ENCODE measurements at regions of chr7 and their contacts with region 1.

Region 1: DNA sequence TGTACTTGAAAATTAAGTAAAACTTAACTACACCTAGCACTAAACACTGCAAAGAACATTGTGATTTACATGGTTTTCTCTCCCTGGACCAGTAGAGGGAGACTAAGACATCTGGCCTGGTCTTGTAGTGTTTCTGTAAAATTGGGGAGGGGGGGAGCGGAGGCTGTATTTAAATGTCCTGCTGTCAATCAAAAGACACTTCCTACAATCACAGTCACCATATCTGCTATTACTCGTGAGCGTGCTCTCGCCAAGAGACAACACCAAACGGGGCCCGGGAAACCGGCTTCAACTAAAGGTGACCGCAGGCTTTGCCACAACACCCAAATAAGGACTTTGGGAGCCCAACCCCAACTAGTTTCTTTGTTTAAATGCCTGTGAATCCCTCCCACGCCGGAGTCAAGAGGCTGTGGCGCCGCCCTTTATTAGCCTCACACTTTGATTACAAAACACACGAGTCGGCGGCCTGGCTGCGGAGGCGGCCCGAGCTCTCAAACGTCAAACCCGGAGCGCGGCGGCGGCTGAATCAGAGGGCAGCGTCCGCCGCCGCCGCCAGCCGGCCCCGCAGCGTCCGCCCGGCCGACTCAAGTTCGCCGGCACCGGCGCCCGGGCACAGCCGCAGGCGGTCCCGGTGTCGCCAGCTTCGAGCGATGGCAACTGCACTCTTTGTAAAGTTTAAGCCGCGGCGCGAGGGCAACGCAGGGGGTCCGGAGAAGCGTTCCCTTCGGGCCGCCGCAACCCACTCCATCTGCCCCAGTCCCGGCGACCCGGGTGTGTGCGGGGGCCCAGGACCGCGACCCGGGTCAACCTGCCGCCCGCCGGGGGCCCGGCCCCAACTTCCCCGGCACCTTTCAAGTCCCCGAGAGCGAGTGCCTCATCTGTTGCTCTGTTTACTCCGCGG is 1.3 kb downstream of the KDM7A start:
- DNase-seq: peak; percentile 84 to 90
- H3K4me3 ChIP-seq: peak overlapping the region; percentile 83
- H3K4me3 Mint-ChIP-seq: peak overlapping the region; percentile 81
- H3K27ac Mint-ChIP-seq: peak overlapping the region; percentile 25
- H3K4me1 ChIP-seq: no peaks in the 10 kb centered on the region
- H3K4me1 Mint-ChIP-seq: peaks cover 13% of the 10 kb centered on the region
- H3K27me3 ChIP-seq: no peaks in the 10 kb centered on the region
- H3K27me3 Mint-ChIP-seq: peaks cover 6% of the 10 kb centered on the region
- CTCF ChIP-seq: peak; percentile 74 to 88

Region 2: DNA sequence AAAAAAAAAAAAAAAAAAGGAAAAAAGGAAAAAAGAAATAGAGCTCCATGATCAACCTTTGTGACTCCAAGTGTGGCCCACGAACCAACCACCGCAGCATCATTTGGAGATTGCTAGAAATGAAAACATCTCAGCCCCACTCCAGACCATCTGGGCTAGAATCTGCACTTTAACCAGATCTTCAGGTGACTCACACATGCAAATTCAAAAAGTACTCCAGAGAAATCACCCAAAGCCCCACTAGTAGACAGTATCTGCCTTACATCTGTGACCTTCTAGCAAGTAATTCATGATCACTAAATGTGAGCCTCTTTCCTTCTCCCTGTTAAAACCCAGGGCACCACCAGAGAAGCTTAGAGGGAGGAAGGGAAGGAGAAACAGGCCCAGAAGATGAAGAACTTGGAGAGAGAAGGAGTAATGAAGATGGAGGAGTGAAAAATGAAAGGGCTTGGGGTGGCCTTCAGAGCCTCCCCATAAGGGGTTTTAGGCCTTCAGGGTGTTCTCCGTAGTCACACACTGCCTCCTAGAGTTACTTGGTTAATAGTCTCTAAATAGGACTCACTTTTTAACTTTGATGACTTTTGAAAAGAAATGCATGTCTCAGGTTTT is 128.8 kb after region 1 on chr7:
- CTCF ChIA-PET with region 1: interaction called, 4 read pairs
- POLR2A ChIA-PET with region 1: no interaction called
- intact Hi-C with region 1: loop called (anchors 1 kb)
- DNase-seq: peak in 1 of 2 experiments; percentile 23
- H3K4me3 ChIP-seq: no peak overlapping the region
- H3K4me3 Mint-ChIP-seq: no peak overlapping the region
- H3K27ac Mint-ChIP-seq: no peak overlapping the region
- H3K4me1 ChIP-seq: no peaks in the 10 kb centered on the region; the same call in 1 of the 2 replicates
- H3K4me1 Mint-ChIP-seq: peaks cover 6% of the 10 kb centered on the region
- H3K27me3 ChIP-seq: no peaks in the 10 kb centered on the region
- H3K27me3 Mint-ChIP-seq: no peaks in the 10 kb centered on the region
- CTCF ChIP-seq: no peak

Region 3: GRCh38 chr7:140342727-140343514 is 167.4 kb after region 1 on chr7:
- CTCF ChIA-PET with region 1: no interaction called
- POLR2A ChIA-PET with region 1: no interaction called
- intact Hi-C with region 1: loop called (anchors 1 kb)
- DNase-seq: peak; percentile 35 to 40
- H3K4me3 ChIP-seq: no peak overlapping the region
- H3K4me3 Mint-ChIP-seq: no peak overlapping the region
- H3K27ac Mint-ChIP-seq: no peak overlapping the region
- H3K4me1 ChIP-seq: no peaks in the 10 kb centered on the region
- H3K4me1 Mint-ChIP-seq: no peaks in the 10 kb centered on the region
- H3K27me3 ChIP-seq: no peaks in the 10 kb centered on the region; the same call in 1 of the 2 replicates
- H3K27me3 Mint-ChIP-seq: no peaks in the 10 kb centered on the region
- CTCF ChIP-seq: peak; percentile 14 to 57

Region 4: DNA sequence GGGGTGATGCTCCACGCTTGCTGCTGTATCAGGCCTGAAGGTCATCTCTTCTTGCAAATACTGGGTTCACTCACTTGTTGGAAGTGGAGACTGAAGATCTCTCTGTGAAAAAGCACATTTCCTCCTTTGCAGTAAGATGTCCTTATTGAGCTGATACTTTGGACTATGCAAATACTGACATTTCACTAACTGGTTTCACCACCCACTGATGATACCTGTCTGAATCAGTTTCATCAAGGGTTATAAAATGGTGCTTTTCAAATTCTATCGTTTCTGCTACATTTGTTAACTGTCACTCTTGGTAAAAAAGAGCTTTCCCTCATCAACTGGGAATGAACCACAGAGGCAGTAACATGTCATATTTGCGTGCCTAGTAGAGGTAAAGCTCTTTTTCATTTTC is 263.9 kb after region 1 on chr7:
- CTCF ChIA-PET with region 1: no interaction called
- POLR2A ChIA-PET with region 1: no interaction called
- intact Hi-C with region 1: no loop called
- DNase-seq: no peak
- H3K4me3 ChIP-seq: no peak overlapping the region
- H3K4me3 Mint-ChIP-seq: no peak overlapping the region
- H3K27ac Mint-ChIP-seq: no peak overlapping the region
- H3K4me1 ChIP-seq: 0 out of 2 replicates have a peak, but pooled peaks cover 5% of the 10 kb centered on the region
- H3K4me1 Mint-ChIP-seq: no peaks in the 10 kb centered on the region
- H3K27me3 ChIP-seq: no peaks in the 10 kb centered on the region
- H3K27me3 Mint-ChIP-seq: no peaks in the 10 kb centered on the region
- CTCF ChIP-seq: no peak

Region 5: GRCh38 chr7:140479062-140479738 is 303.7 kb after region 1 on chr7 and contains the start of gene MKRN1:
- CTCF ChIA-PET with region 1: no interaction called
- POLR2A ChIA-PET with region 1: no interaction called
- intact Hi-C with region 1: loop called (anchors 10 kb)
- DNase-seq: peak; percentile 98
- H3K4me3 ChIP-seq: peak within 1 kb of the TSS; percentile 99
- H3K4me3 Mint-ChIP-seq: peak within 1 kb of the TSS; percentile 79
- H3K27ac Mint-ChIP-seq: peak within 1 kb of the TSS; percentile 84
- H3K4me1 ChIP-seq: no peaks in the 10 kb centered on the region
- H3K4me1 Mint-ChIP-seq: peaks cover 6% of the 10 kb centered on the region
- H3K27me3 ChIP-seq: no peaks in the 10 kb centered on the region
- H3K27me3 Mint-ChIP-seq: no peaks in the 10 kb centered on the region
- CTCF ChIP-seq: no peak
- total RNA-seq, gene MKRN1: 62.4 and 73.0 TPM in 2 replicates

Region 6: GRCh38 chr7:140653319-140654108 is 478.0 kb after region 1 on chr7:
- CTCF ChIA-PET with region 1: no interaction called
- POLR2A ChIA-PET with region 1: no interaction called
- intact Hi-C with region 1: loop called (anchors 10 kb)
- DNase-seq: peak; percentile 71 to 80
- H3K4me3 ChIP-seq: no peak overlapping the region
- H3K4me3 Mint-ChIP-seq: no peak overlapping the region
- H3K27ac Mint-ChIP-seq: no peak overlapping the region
- H3K4me1 ChIP-seq: peaks cover 9% of the 10 kb centered on the region
- H3K4me1 Mint-ChIP-seq: peaks cover 12% of the 10 kb centered on the region
- H3K27me3 ChIP-seq: no peaks in the 10 kb centered on the region
- H3K27me3 Mint-ChIP-seq: no peaks in the 10 kb centered on the region
- CTCF ChIP-seq: peak; percentile 80 to 82